HepG2 (cell line): ENCODE measurements at regions of chr6 and their contacts with region 1.

Region 1: DNA sequence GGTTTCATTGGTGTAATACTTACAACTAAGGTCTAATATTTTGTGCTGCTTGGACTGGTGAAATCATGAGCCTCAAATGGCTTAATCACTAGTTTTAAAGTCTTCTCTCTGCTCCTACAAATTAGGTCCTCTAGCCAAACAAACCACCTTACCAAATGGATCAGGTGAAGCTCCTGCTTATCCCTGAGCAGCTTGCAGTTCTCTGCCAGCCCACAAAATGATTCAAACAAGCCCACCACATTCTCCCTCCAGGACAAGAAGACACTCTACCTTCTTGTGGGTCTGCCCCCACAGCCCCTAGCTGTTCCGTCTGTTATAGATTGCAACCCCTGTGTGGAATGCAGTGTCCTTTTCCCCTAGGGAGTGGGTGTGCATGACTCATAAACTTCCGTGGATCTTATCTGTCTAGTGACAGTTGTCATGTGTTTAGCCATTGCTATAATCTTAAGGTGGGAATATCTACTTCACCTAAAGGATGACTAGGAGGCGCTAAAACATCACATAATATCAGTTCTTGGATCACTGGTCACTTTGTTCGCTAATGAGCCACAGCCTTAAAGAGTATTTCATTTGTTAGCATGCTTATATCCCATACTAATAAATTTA is 940.5 kb upstream of the MANEA start:
- DNase-seq: peak; percentile 32
- ATAC-seq: peak; percentile 88
- H3K4me3 ChIP-seq: no peak overlapping the region
- H3K27ac ChIP-seq: no peak overlapping the region
- H3K4me1 ChIP-seq: no peaks in the 10 kb centered on the region
- H3K27me3 ChIP-seq: no peaks in the 10 kb centered on the region
- CTCF ChIP-seq: peak; percentile 60
- EP300 ChIP-seq: no peak
- POLR2A ChIP-seq: no peak
- RAD21 ChIP-seq: no peak

Region 2: GRCh38 chr6:95091823-95092436 is 455.0 kb after region 1 on chr6:
- CTCF ChIA-PET with region 1: interaction called, 13 read pairs
- POLR2A ChIA-PET with region 1: no interaction called
- in situ Hi-C with region 1: no loop called
- intact Hi-C with region 1: loop called (anchors 1 kb)
- DNase-seq: peak; percentile 41
- ATAC-seq: peak; percentile 85
- H3K4me3 ChIP-seq: no peak overlapping the region
- H3K27ac ChIP-seq: no peak overlapping the region
- H3K4me1 ChIP-seq: no peaks in the 10 kb centered on the region
- H3K27me3 ChIP-seq: no peaks in the 10 kb centered on the region
- CTCF ChIP-seq: peak; percentile 68
- EP300 ChIP-seq: no peak
- POLR2A ChIP-seq: no peak
- RAD21 ChIP-seq: 0 out of 2 replicates have a peak, but pooled peaks have one; percentile 31